ENCODE measurements at regions of chr1 and their contacts with region 1.

Region 1: DNA sequence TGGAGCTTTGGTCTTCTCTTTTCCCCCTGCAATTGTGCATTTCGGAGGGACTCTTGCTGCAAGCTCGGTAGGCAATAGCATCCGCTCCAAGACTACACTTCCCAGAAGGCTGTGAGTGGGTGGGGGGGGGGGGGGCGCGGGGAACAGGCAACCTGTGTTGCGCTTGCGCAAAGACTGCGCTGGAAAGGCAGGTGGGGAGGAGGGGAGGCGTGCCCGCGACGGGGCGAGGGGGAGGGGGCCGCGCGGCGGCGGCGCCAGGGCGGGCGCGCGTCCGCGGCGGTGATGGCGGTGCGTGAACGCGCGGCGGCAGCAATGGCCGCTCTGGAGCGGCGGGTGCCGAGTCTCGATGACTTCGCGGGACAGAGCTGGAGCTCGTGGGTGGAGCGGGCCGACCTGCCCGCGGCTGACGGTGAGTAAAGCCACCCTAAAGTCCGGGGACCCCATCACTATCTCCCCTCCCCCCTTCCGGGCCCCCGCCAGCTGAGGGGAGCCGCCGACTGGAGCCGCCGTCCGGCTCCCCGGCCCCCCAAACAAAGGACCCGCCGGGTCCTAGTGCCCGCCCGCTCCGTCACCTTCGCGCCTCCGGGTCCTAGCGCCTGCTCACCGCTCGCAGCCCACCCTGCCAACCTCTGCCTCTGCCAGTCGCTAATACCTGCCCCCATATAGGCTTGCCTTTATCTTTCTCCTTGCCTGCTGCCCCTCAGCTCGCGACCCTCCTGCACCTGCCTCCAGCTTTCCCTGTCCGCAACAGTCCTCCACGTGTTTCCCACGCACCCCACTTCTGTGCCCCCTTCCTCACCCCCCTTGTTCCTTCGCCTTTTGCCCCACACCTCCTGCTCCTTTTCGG is at the start of gene ATXN7L2:
- DNase-seq: peak; percentile 100

Region 2: DNA sequence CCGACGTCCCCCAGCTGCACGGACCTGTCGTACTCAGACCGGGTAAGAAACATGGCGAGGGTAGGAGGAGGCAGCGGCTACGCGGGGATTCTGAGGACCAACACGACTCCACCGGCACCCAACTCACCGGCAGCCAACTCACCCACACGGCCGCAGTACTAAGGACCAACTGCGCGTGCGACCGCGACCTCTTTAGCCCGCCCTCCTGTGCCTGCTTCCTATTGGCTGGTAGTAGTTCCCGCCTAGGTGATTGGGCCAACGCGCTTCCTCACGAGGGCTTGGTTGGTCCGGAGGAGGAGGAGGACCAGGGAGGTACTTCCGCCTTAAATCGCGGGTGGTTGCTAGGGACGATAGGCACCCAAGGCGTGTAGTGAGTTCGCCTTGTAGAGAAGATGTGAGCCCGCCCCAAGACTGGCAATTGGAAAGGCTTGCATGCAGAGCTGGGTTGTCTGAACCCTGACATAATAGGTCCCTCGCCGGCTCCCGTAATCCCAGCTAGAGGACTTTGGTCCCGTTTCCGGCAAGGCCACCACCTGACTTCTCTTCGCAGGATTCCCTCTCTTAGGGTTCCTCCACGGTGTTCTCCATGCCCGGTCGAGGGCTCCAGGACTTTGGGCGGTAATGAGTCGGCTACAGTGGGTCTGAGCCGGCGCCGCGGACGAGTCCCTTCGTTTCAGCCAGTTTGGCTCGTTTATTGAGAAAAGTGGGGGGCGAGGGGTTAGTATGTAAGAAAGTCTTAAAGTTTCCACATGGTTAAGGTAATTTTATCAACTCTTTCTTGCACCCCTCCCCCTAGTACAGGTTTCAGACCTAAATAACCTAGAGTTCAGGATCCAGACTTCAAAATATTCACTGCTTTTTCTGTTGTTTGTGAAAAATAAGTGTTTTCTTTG is 57.4 kb before region 1 on chr1 and contains the start of gene PSMA5:
- CTCF ChIA-PET with region 1: no interaction called
- POLR2A ChIA-PET with region 1: interaction called, 11 read pairs
- DNase-seq: peak; percentile 98

Region 3: DNA sequence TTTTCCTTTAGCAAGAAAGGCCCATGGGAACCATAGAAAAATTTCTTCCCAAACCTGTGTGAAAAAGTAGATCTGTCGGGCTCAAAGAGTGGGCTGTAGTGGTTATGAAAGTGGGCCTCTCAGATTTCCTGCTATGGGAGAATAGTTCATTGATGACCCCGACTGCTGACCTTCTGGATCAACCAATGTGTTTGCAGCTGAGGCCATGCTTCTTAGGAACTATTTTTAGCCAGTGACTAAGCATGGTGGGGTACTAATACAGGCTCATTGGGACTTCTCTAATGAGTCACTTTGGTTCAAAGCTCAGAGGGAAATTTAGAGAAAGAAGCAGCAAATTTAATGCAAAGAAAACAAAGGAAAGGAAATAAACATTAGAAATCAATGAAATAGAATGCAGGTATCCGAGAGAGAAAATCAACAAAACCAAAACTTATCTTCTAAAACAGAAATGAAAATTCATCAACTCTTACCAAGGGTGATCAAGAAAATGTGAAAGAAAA is 45.0 kb before region 1 on chr1:
- CTCF ChIA-PET with region 1: no interaction called
- POLR2A ChIA-PET with region 1: no interaction called
- DNase-seq: no peak

Region 4: DNA sequence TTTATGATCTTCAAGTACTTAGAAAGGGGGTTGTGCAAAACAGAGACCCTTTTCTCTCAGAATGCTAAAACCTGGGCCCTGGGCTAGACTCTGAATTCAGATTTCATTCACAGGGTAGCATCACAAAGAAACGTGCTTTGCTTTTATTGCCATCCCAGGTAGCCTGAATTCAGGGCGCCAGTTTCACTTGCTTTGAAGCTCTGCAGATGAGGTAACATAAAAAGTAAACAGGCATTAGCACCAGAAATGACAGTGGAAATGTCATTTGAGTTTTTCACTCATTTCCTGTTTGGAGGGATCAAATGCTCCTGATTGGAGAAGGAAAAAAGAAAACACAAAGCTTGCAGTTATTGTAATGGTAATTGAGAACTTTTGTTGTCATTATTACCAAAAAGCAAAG is 15.0 kb before region 1 on chr1:
- CTCF ChIA-PET with region 1: interaction called, 3 read pairs
- POLR2A ChIA-PET with region 1: interaction called, 11 read pairs
- DNase-seq: no peak

Region 5: GRCh38 chr1:109493805-109494539 is 10.1 kb after region 1 on chr1 and contains the start of gene CYB561D1:
- CTCF ChIA-PET with region 1: interaction called, 12 read pairs
- POLR2A ChIA-PET with region 1: interaction called, 14 read pairs
- DNase-seq: peak; percentile 97